Posterior vena cava (tissue), 2 donors: ENCODE measurements at regions of chr5 and their contacts with region 1.

Region 1: DNA sequence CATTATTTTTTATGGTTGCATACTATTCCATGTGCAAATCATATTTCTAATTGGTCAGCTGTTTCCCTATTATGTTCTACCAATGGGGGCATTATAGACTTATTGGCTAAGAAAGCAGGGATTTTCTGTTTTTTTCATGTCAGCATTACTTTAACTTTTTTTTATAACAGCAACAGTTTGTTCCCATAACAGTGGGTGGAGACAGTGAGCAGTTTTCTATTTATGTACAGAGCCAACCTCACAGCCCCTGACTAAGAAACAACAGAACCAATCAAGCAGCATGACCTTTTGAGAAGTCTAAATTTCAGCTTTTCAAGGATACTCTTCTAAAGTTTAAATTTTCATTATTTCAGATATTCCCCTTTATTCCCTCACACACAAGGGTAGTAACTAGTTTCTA is 2026.2 kb downstream of the EFNA5 start:
- DNase-seq: no peak

Region 2: DNA sequence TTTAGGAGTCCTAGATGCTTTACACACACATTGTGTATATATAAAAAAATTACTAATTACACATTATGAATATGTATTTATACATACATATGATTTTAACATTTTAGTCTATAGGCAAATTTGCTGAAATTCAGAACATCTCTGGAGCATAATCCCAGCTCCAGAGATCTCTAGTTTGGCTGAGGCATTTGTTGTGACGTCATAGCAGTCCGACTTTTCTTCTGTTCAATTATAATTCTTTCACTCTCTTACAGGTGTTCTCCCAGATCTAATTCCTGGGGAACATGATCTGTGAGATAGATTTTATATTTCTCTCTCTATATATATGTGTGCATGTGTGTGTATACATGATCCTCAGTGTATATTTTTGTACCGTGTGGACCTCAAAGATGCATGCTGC is 150.1 kb after region 1 on chr5:
- intact Hi-C with region 1: no loop called
- DNase-seq: no peak

Region 3: DNA sequence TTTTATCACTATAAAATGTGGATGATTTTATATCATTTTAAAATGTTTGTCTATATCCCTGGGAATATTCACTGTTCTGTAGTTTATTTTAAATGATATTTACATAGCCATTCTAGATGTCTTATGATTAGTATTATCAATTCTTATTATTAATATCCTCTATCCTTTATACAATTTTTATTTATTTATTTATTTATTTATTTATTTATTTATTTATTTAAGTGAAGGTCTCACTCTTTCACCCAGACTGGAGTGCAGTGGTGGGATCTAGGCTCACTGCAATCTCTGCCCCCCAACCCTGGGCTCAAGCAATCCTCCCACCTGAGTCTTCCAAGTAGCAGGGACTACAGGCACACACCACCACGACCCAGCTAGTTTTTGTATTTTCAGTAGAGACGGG is 177.3 kb after region 1 on chr5:
- intact Hi-C with region 1: no loop called
- DNase-seq: no peak

Region 4: GRCh38 chr5:105982526-105982925 is 338.0 kb after region 1 on chr5:
- intact Hi-C with region 1: loop called in 1 of 2 experiments (anchors 5 kb)
- DNase-seq: peak; percentile 63